ENCODE measurements at regions of chr11 and their contacts with region 1.

Region 1: DNA sequence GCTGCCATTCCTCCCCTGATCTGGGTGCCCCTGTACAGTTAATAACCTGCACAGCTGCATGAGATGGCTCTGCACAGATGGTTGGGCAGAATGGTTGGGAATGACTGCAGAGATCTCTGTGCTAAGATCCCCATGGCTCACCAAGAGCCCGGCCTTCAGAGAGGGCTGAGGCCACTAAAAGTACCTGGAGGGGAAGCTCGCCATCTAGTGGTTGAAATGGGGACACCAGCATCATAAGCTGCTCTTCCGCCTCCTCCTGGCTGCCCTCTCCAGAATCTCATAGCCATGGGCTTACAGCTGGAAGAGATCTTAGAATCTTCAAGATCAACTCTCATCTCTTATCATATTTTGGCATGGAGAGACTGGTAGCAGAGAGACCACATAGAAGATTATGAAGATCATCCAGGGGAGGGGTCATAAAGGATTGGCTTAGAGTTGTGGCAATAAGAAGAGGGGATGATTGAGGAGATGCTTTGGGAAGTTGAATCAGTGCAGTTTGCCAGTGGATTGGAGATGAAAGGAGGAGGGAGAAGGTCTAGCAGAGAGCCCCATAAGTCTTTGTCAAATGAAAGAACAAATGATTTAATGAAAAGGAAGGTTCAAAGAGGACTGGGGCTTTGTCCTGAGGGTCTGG is 22.0 kb upstream of the TLCD5 start:
- DNase-seq: peak; percentile 93
- ATAC-seq: peak; percentile 23
- H3K4me3 ChIP-seq: no peak overlapping the region
- H3K27ac ChIP-seq: no peak overlapping the region
- H3K4me1 ChIP-seq: peaks cover 66% of the 10 kb centered on the region
- H3K27me3 ChIP-seq: no peaks in the 10 kb centered on the region
- CTCF ChIP-seq: peak; percentile 100

Region 2: DNA sequence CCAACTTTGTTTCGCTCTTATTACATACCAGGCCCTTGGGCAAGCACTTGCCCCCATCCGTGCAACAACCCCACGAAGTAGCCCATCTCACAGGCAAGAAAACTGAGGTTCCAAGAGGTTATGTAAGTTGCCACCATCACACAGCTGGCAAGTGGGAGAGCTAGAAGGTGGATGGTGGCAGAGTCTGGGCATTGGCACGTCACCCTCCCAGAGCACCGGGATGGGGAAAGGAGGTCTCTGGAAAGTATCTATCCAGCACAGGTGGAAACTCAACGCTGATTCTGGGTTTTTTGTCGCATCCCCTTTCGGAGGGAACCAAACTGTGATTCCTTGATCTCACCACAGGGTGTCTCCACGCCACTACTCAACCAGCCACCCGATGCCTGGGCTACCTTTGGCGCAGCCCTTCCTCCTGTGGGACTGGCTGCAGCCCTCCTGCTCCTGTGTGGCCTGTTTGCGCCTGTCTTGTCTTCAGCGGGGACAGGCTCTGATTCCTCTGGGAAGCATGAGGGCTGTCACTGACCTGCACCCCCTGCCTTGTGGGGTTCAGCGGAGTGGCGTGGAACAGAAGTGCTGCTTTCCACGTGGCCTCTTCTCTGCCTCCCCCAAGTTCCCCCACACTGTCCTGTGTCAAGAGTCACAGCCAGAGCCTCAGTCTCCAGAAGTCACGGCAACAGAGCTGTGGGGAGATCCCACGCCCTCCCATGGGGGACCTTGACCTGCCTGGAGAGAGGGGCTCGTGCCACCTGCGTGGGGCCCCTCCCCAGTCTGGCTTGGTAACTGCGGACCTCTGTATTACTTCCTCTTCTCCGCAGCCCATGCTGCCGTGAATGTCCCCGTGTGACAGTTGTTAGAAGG is 130.8 kb before region 1 on chr11:
- CTCF ChIA-PET with region 1: no interaction called
- POLR2A ChIA-PET with region 1: no interaction called
- intact Hi-C with region 1: loop called (anchors 1 kb)
- DNase-seq: peak; percentile 81
- ATAC-seq: peak; percentile 78
- H3K4me3 ChIP-seq: no peak overlapping the region
- H3K27ac ChIP-seq: no peak overlapping the region
- H3K4me1 ChIP-seq: peaks cover 8% of the 10 kb centered on the region
- H3K27me3 ChIP-seq: peaks cover 39% of the 10 kb centered on the region
- CTCF ChIP-seq: peak; percentile 91

Region 3: GRCh38 chr11:120210626-120211521 is 92.2 kb before region 1 on chr11 and contains the start of gene OAF:
- CTCF ChIA-PET with region 1: interaction called, 12 read pairs
- POLR2A ChIA-PET with region 1: no interaction called
- intact Hi-C with region 1: loop called (anchors 1 kb)
- DNase-seq: peak; percentile 89
- ATAC-seq: peak; percentile 69
- H3K4me3 ChIP-seq: peak within 1 kb of the TSS; percentile 77
- H3K27ac ChIP-seq: peak within 1 kb of the TSS; percentile 78
- H3K4me1 ChIP-seq: peaks cover 59% of the 10 kb centered on the region
- H3K27me3 ChIP-seq: no peaks in the 10 kb centered on the region
- CTCF ChIP-seq: peak; percentile 11; the same call in 1 of the 2 replicates
- total RNA-seq, gene OAF: 97.1 and 126 TPM in 2 replicates

Region 4: GRCh38 chr11:120235024-120235861 is 67.9 kb before region 1 on chr11:
- CTCF ChIA-PET with region 1: interaction called, 50 read pairs
- POLR2A ChIA-PET with region 1: no interaction called
- intact Hi-C with region 1: loop called (anchors 1 kb)
- DNase-seq: peak; percentile 88
- ATAC-seq: peak; percentile 86
- H3K4me3 ChIP-seq: no peak overlapping the region
- H3K27ac ChIP-seq: no peak overlapping the region
- H3K4me1 ChIP-seq: peaks cover 5% of the 10 kb centered on the region; the same call in 1 of the 2 replicates
- H3K27me3 ChIP-seq: peaks cover 16% of the 10 kb centered on the region
- CTCF ChIP-seq: peak; percentile 98

Region 5: DNA sequence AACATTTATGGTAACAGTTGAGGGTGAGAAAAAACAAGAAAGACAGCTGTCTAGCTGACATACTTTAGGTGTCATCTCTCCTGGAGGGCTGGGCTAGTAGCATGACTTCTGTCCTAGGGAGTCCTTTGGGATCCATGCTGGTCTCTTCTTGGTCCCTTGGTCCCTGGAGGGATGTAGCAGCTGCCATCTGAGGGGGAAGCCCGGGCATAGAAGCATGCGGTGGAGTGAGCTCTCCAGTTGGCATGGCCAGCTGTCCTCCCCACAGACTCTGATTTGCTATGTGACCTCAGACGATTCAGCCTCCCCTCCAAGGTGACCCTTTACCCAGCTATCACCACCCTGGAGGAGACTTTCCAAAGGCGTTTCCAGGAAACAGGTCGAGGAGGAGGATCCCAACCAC is 34.4 kb before region 1 on chr11:
- CTCF ChIA-PET with region 1: no interaction called
- POLR2A ChIA-PET with region 1: no interaction called
- intact Hi-C with region 1: no loop called
- DNase-seq: no peak
- ATAC-seq: no peak
- H3K4me3 ChIP-seq: no peak overlapping the region
- H3K27ac ChIP-seq: no peak overlapping the region
- H3K4me1 ChIP-seq: peaks cover 10% of the 10 kb centered on the region
- H3K27me3 ChIP-seq: peaks cover 48% of the 10 kb centered on the region
- CTCF ChIP-seq: no peak

Region 6: GRCh38 chr11:120326228-120326627 is 23.1 kb after region 1 on chr11:
- CTCF ChIA-PET with region 1: interaction called, 5 read pairs
- POLR2A ChIA-PET with region 1: interaction called, 10 read pairs
- intact Hi-C with region 1: loop called (anchors 2 kb)
- DNase-seq: no peak
- ATAC-seq: no peak
- H3K4me3 ChIP-seq: peak overlapping the region; percentile 72
- H3K27ac ChIP-seq: no peak overlapping the region
- H3K4me1 ChIP-seq: peaks cover 31% of the 10 kb centered on the region
- H3K27me3 ChIP-seq: no peaks in the 10 kb centered on the region
- CTCF ChIP-seq: no peak

Region 7: DNA sequence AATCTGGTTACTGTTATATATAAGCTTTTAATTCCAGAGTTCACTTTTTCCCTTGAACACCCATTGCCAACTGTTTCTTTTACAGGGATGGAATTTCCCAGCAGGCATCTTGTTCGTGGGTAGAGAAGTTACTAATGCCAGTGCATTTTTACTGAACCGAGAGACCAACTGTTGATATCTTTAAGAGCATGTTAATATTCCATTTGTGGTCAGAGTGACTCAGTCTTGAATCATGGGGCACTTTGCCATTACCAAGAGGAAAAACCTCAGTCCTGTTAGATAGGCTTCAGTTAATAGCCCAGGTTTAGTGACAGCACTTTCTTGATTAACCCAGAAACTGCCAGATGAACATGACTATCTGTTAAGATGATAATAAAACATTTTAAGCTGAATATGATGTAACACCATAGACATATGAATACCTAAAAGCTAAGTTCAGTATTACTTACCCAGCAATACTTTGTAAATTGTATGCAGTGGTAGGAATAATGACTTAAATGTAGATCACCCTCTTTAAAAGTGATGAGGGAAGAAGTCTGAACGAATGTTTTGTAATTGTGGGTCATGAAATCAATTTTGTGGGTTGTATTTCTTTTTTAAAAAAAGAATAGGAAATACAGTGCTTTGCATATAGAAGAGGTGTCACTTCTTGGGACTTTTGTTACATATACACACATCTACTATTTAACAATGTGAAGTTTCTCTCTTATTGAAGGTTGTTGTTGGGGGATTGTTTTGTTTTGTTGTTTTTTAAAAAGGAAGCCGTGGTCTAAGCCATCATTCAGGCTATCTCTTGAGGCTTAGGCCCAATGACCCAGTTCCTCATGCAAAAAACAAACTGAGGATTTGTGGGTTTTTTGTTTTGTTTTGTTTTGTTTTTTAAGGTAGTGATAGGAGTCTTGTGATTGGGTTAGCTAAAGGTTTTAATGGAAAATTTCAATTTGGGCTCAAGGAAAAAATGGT is 129.2 kb after region 1 on chr11:
- CTCF ChIA-PET with region 1: interaction called, 3 read pairs
- POLR2A ChIA-PET with region 1: no interaction called
- intact Hi-C with region 1: loop called (anchors 1 kb)
- DNase-seq: peak; percentile 100
- ATAC-seq: peak; percentile 94
- H3K4me3 ChIP-seq: peak overlapping the region; percentile 39
- H3K27ac ChIP-seq: peak overlapping the region; percentile 74
- H3K4me1 ChIP-seq: peaks cover 18% of the 10 kb centered on the region
- H3K27me3 ChIP-seq: no peaks in the 10 kb centered on the region
- CTCF ChIP-seq: no peak